ENCODE measurements at regions of chr1 and their contacts with region 1.

Region 1: GRCh38 chr1:217747156-217747769 is 116.1 kb downstream of the SPATA17 start:
- DNase-seq: peak; percentile 13
- ATAC-seq: no peak
- H3K4me3 ChIP-seq: no peak overlapping the region
- H3K27ac ChIP-seq: no peak overlapping the region
- H3K4me1 ChIP-seq: no peaks in the 10 kb centered on the region
- H3K27me3 ChIP-seq: no peaks in the 10 kb centered on the region
- CTCF ChIP-seq: peak; percentile 53
- EP300 ChIP-seq: no peak
- POLR2A ChIP-seq: no peak
- RAD21 ChIP-seq: no peak

Region 2: DNA sequence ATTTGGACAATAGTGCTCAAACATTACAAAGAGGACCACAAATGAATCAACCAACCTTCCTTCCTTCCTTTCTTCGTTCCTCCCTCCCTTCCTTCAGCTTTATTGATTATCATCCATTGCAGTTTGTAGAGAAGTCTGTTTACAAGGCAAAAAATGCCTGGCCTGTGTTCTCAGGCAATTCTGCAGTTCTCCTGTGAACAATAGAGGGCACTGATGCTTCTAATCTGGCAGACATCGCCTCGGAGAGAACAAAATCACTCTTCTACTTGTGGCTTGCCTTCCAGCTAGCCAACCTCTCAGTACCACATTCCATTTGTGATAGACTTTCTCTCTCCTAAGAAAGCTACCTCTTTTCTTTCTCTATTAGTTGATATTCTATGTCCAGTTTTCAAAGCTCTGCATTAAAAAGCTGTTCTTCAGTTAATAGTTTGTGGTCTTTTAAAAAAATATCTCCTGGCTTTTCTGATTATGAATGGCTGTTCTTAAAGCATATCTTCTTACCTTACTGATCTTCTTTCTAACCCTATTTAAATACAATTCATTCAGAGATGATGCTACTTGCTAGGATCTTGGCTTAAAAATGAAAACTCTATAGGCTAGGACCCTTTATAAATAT is 997.1 kb before region 1 on chr1:
- CTCF ChIA-PET with region 1: no interaction called
- POLR2A ChIA-PET with region 1: no interaction called
- in situ Hi-C with region 1: no loop called
- intact Hi-C with region 1: loop called (anchors 1 kb)
- DNase-seq: peak; percentile 21
- ATAC-seq: peak; percentile 76
- H3K4me3 ChIP-seq: no peak overlapping the region
- H3K27ac ChIP-seq: no peak overlapping the region
- H3K4me1 ChIP-seq: no peaks in the 10 kb centered on the region
- H3K27me3 ChIP-seq: no peaks in the 10 kb centered on the region
- CTCF ChIP-seq: peak; percentile 69
- EP300 ChIP-seq: no peak
- POLR2A ChIP-seq: no peak
- RAD21 ChIP-seq: 0 out of 2 replicates have a peak, but pooled peaks have one; percentile 17

Region 3: DNA sequence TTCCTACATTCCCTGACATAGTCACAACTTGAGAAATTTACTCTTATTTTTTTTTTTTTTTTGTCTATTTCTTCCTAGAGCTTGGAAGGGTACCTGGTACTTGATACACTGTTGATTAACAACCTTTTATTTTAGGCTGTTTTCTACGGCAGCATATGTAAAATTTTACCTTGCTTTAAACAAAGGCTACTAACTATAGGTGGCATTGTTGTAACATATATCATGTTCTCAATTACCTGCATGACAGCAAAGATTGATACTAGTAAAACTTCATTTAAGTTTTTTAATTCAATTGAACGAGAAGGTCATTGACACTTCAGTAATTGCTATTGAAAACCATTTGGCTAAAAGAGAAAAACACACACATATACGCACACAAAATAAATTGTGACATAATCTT is 785.7 kb before region 1 on chr1:
- CTCF ChIA-PET with region 1: no interaction called
- POLR2A ChIA-PET with region 1: no interaction called
- in situ Hi-C with region 1: no loop called
- intact Hi-C with region 1: loop called (anchors 5 kb)
- DNase-seq: no peak
- ATAC-seq: no peak
- H3K4me3 ChIP-seq: no peak overlapping the region
- H3K27ac ChIP-seq: no peak overlapping the region
- H3K4me1 ChIP-seq: no peaks in the 10 kb centered on the region
- H3K27me3 ChIP-seq: no peaks in the 10 kb centered on the region
- CTCF ChIP-seq: no peak
- EP300 ChIP-seq: no peak
- POLR2A ChIP-seq: no peak
- RAD21 ChIP-seq: no peak